CD4-positive, alpha-beta T cell (primary cell): ENCODE measurements at regions of chr19 and their contacts with region 1.

Region 1: GRCh38 chr19:36214386-36215275 is at the starts of genes ZNF146 and ZNF565:
- DNase-seq: peak; percentile 90 to 99 (median 94)
- ATAC-seq: peak; percentile 84
- H3K4me3 ChIP-seq: peak within 1 kb of the TSS; percentile 86
- H3K4me3 Mint-ChIP-seq: no peak within 1 kb of the TSS
- H3K27ac ChIP-seq: peak within 1 kb of the TSS; percentile 93 to 99
- H3K27ac Mint-ChIP-seq: no peak within 1 kb of the TSS
- H3K4me1 ChIP-seq: peaks cover 28% of the 10 kb centered on the region
- H3K4me1 Mint-ChIP-seq: peaks cover 17% of the 10 kb centered on the region
- H3K27me3 ChIP-seq: no peaks in the 10 kb centered on the region
- H3K27me3 Mint-ChIP-seq: no peaks in the 10 kb centered on the region
- CTCF ChIP-seq: no peak
- total RNA-seq, gene ZNF146: 13.6 to 13.7 TPM
- total RNA-seq, gene ZNF565: 7.6 to 8.5 TPM

Region 2: GRCh38 chr19:36139473-36140303 is 74.9 kb before region 1 on chr19 and contains the start of gene CAPNS1:
- CTCF ChIA-PET with region 1: interaction called, 7 read pairs
- POLR2A ChIA-PET with region 1: interaction called, 7 read pairs
- intact Hi-C with region 1: loop called in 1 of 2 experiments (anchors 5 kb)
- DNase-seq: peak; percentile 82 to 95 (median 88)
- ATAC-seq: peak; percentile 63
- H3K4me3 ChIP-seq: peak within 1 kb of the TSS; percentile 97
- H3K4me3 Mint-ChIP-seq: peak within 1 kb of the TSS; percentile 89
- H3K27ac ChIP-seq: peak within 1 kb of the TSS; percentile 76 to 80
- H3K27ac Mint-ChIP-seq: peak within 1 kb of the TSS; percentile 60
- H3K4me1 ChIP-seq: peaks cover 25% of the 10 kb centered on the region
- H3K4me1 Mint-ChIP-seq: peaks cover 22% of the 10 kb centered on the region
- H3K27me3 ChIP-seq: no peaks in the 10 kb centered on the region
- H3K27me3 Mint-ChIP-seq: no peaks in the 10 kb centered on the region
- CTCF ChIP-seq: no peak
- total RNA-seq, gene CAPNS1: 167 to 177 TPM

Region 3: GRCh38 chr19:36245210-36246005 is 30.8 kb after region 1 on chr19:
- CTCF ChIA-PET with region 1: no interaction called
- POLR2A ChIA-PET with region 1: no interaction called
- intact Hi-C with region 1: no loop called
- DNase-seq: no peak
- ATAC-seq: no peak
- H3K4me3 ChIP-seq: no peak overlapping the region
- H3K4me3 Mint-ChIP-seq: no peak overlapping the region
- H3K27ac ChIP-seq: no peak overlapping the region
- H3K27ac Mint-ChIP-seq: no peak overlapping the region
- H3K4me1 ChIP-seq: no peaks in the 10 kb centered on the region
- H3K4me1 Mint-ChIP-seq: no peaks in the 10 kb centered on the region
- H3K27me3 ChIP-seq: peaks cover 0 to 4% of the 10 kb centered on the region in 2 experiments
- H3K27me3 Mint-ChIP-seq: peaks cover 4% of the 10 kb centered on the region
- CTCF ChIP-seq: no peak

Region 4: GRCh38 chr19:36489118-36489919 is 274.7 kb after region 1 on chr19 and contains the start of gene ZNF566:
- CTCF ChIA-PET with region 1: no interaction called
- POLR2A ChIA-PET with region 1: interaction called, 20 read pairs
- intact Hi-C with region 1: loop called (anchors 2 to 10 kb)
- DNase-seq: peak; percentile 84 to 97 (median 89)
- ATAC-seq: peak; percentile 90
- H3K4me3 ChIP-seq: peak within 1 kb of the TSS; percentile 64
- H3K4me3 Mint-ChIP-seq: peak within 1 kb of the TSS; percentile 97
- H3K27ac ChIP-seq: peak within 1 kb of the TSS; percentile 84 to 87
- H3K27ac Mint-ChIP-seq: peak within 1 kb of the TSS; percentile 99
- H3K4me1 ChIP-seq: peaks cover 19% of the 10 kb centered on the region
- H3K4me1 Mint-ChIP-seq: peaks cover 36% of the 10 kb centered on the region
- H3K27me3 ChIP-seq: no peaks in the 10 kb centered on the region
- H3K27me3 Mint-ChIP-seq: no peaks in the 10 kb centered on the region
- CTCF ChIP-seq: no peak
- total RNA-seq, gene ZNF566: 6.3 to 6.8 TPM

Region 5: GRCh38 chr19:36605101-36605876 is 390.7 kb after region 1 on chr19 and contains the start of gene ZNF382:
- CTCF ChIA-PET with region 1: no interaction called
- POLR2A ChIA-PET with region 1: interaction called, 23 read pairs
- intact Hi-C with region 1: no loop called
- DNase-seq: peak; percentile 74 to 92 (median 85)
- ATAC-seq: peak; percentile 75
- H3K4me3 ChIP-seq: peak within 1 kb of the TSS; percentile 87
- H3K4me3 Mint-ChIP-seq: peak within 1 kb of the TSS; percentile 85
- H3K27ac ChIP-seq: peak within 1 kb of the TSS; percentile 92 to 95
- H3K27ac Mint-ChIP-seq: peak within 1 kb of the TSS; percentile 83
- H3K4me1 ChIP-seq: peaks cover 10% of the 10 kb centered on the region
- H3K4me1 Mint-ChIP-seq: peaks cover 28% of the 10 kb centered on the region
- H3K27me3 ChIP-seq: no peaks in the 10 kb centered on the region
- H3K27me3 Mint-ChIP-seq: no peaks in the 10 kb centered on the region
- CTCF ChIP-seq: no peak
- total RNA-seq, gene ZNF382: 4.2 to 4.4 TPM

Region 6: GRCh38 chr19:37077934-37078725 is 863.5 kb after region 1 on chr19 and contains the start of gene ZNF420:
- CTCF ChIA-PET with region 1: no interaction called
- POLR2A ChIA-PET with region 1: interaction called, 10 read pairs
- intact Hi-C with region 1: no loop called
- DNase-seq: peak; percentile 75 to 95 (median 84)
- ATAC-seq: peak; percentile 95
- H3K4me3 ChIP-seq: peak within 1 kb of the TSS; percentile 99
- H3K4me3 Mint-ChIP-seq: peak within 1 kb of the TSS; percentile 98
- H3K27ac ChIP-seq: peak within 1 kb of the TSS; percentile 65 to 72
- H3K27ac Mint-ChIP-seq: peak within 1 kb of the TSS; percentile 91
- H3K4me1 ChIP-seq: peaks cover 25% of the 10 kb centered on the region
- H3K4me1 Mint-ChIP-seq: peaks cover 30% of the 10 kb centered on the region
- H3K27me3 ChIP-seq: no peaks in the 10 kb centered on the region
- H3K27me3 Mint-ChIP-seq: no peaks in the 10 kb centered on the region
- CTCF ChIP-seq: no peak
- total RNA-seq, gene ZNF420: 3.7 to 4.5 TPM

Region 7: GRCh38 chr19:37506387-37507166 is 1291.9 kb after region 1 on chr19 and contains the start of gene ZNF793:
- CTCF ChIA-PET with region 1: no interaction called
- POLR2A ChIA-PET with region 1: interaction called, 11 read pairs
- intact Hi-C with region 1: loop called in 1 of 2 experiments (anchors 10 kb)
- DNase-seq: peak; percentile 68 to 92 (median 78)
- ATAC-seq: peak; percentile 85
- H3K4me3 ChIP-seq: peak within 1 kb of the TSS; percentile 68
- H3K4me3 Mint-ChIP-seq: no peak within 1 kb of the TSS
- H3K27ac ChIP-seq: peak within 1 kb of the TSS; percentile 88 to 92
- H3K27ac Mint-ChIP-seq: no peak within 1 kb of the TSS
- H3K4me1 ChIP-seq: peaks cover 20% of the 10 kb centered on the region
- H3K4me1 Mint-ChIP-seq: no peaks in the 10 kb centered on the region
- H3K27me3 ChIP-seq: no peaks in the 10 kb centered on the region
- H3K27me3 Mint-ChIP-seq: no peaks in the 10 kb centered on the region
- CTCF ChIP-seq: no peak
- total RNA-seq, gene ZNF793: 2.3 TPM